Calu3 (cell line): ENCODE measurements at regions of chr1 and their contacts with region 1.

Region 1: GRCh38 chr1:36350659-36351226 is 27.3 kb upstream of the EVA1B start:
- DNase-seq: peak; percentile 76
- H3K4me3 Mint-ChIP-seq: peak overlapping the region; percentile 32
- H3K27ac Mint-ChIP-seq: peak overlapping the region; percentile 92
- H3K4me1 Mint-ChIP-seq: peaks cover 36% of the 10 kb centered on the region
- H3K27me3 Mint-ChIP-seq: no peaks in the 10 kb centered on the region
- CTCF ChIP-seq: no peak

Region 2: GRCh38 chr1:36300526-36300925 is 50.2 kb before region 1 on chr1:
- CTCF ChIA-PET with region 1: interaction called, 10 read pairs
- intact Hi-C with region 1: no loop called
- DNase-seq: no peak
- H3K4me3 Mint-ChIP-seq: peak overlapping the region; percentile 41
- H3K27ac Mint-ChIP-seq: peak overlapping the region; percentile 94
- H3K4me1 Mint-ChIP-seq: peaks cover 22% of the 10 kb centered on the region
- H3K27me3 Mint-ChIP-seq: no peaks in the 10 kb centered on the region
- CTCF ChIP-seq: no peak

Region 3: DNA sequence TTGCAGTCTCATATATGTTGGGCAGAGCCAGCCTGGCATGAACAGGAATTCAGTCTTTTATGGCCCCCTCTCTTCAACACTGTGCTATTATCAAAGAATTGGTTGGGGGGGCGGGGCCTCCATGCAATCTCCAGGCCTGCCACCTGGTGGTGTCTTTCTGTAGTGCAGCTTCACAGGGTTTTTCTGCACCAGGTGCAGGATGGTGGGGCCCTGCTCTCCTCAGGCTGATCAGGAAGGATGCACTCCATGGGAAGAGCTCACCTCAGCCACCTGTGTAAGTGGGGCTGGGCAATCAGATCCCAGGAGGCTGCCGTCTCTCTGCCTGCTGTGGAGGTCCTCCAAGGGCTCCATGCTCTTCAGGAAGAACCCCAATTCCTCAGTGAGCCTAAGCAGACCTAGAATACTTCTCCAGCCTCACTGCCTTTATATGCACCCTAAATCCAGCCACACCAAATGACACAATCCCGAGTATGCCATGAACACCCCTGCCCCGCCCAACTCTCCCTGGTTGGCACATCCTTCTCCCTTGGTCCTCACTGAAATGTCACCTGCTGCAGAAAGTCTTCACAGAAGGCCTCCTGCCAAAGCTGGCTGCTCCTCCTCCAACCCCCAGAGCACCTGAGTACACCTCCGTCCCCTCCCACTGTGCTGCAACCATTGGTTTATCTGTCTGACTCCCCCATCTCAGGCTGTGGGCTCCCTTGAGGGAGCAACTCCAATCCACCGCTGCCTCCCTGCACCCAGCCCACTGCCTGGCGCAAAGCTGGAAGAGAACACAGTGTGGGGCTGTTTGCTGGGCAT is 18.5 kb after region 1 on chr1:
- CTCF ChIA-PET with region 1: interaction called, 12 read pairs
- intact Hi-C with region 1: loop called (anchors 2 kb)
- DNase-seq: peak; percentile 87
- H3K4me3 Mint-ChIP-seq: no peak overlapping the region
- H3K27ac Mint-ChIP-seq: peak overlapping the region; percentile 50
- H3K4me1 Mint-ChIP-seq: peaks cover 28% of the 10 kb centered on the region
- H3K27me3 Mint-ChIP-seq: no peaks in the 10 kb centered on the region
- CTCF ChIP-seq: peak; percentile 87

Region 4: DNA sequence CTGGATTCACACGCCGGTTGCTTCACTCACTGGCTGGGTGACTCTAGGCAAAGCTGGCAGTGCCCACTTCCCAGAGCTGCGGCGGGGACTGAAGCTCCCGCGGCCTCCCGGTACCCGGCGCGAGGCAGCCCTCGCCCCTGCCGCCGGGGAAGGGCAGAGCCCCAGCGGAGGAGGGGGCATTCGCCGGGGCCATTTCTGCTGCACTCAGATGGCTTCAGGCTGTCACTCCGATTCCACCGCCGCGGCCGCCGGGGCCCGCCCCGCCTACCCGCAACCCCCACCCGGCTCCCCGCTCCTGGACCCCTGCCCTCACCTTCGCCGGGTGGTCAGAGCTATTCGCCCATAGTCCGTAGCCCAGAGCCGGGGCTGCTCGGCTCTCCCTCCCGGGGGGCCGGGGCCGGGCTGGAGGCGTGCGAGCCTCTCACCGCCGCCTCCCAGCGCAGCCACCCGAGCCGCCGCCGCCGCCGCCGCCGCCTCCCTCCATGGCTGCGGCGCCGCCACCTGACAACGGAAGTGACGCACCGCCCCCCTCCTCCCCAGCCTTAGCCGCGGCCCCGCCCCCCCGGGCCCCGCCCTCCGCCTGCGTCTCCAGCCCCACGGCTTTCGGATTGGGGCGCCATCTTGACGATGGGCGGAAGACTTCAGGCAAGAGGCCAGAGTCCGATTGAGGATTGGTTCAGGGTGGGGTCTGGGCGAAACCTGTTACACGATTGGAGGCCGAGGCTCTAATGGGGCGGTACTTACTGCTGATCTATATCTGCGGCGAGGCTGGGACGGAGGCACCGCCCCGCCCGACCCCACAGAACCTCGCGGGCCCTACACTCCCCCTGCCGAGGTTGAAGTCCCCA is 34.9 kb after region 1 on chr1 and contains the start of gene STK40:
- CTCF ChIA-PET with region 1: interaction called, 12 read pairs
- intact Hi-C with region 1: no loop called
- DNase-seq: peak; percentile 96
- H3K4me3 Mint-ChIP-seq: peak within 1 kb of the TSS; percentile 90
- H3K27ac Mint-ChIP-seq: peak within 1 kb of the TSS; percentile 100
- H3K4me1 Mint-ChIP-seq: peaks cover 59% of the 10 kb centered on the region
- H3K27me3 Mint-ChIP-seq: no peaks in the 10 kb centered on the region
- CTCF ChIP-seq: no peak
- total RNA-seq, gene STK40: 44.5 and 52.1 TPM in 2 replicates

Region 5: DNA sequence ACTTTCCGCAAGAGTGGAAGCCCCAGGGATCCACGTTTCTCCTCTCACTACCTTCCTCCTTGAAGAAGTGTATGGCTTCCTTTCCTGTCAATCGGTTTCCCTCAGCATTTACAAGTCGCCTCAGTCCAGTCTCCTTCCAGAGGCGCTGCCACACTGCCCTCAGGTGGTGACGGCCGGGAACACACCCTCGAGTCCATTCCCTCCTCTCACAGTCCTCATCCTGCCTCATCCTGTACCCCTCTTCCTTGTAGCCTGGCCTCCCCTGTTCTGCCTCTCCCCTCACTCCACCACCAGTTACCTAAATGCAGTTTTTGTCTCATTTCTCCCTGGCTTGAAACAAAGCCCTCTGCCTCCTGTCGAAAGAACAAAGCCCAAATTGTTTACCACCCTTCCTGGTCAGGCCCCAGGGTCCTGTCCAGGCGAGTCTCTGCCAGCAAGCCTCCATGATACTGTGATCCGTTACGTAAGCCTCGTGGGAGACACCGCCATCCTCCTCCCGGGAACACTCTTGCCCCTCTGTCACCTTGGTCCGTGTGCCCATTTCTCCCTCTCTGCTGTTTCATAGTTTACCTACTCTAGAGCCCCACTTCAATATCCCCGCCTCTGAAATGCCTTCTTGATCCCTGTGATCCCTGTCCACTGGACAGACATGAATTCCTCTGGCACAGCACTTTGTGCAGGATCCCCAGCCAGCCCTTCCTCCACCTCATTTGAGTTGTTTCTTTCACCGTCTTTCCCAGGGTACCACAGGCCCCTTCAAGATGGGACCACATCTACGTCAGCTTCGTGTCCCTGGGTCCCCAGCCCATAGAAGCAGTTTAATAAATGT is 70.3 kb after region 1 on chr1:
- CTCF ChIA-PET with region 1: no interaction called
- intact Hi-C with region 1: loop called (anchors 2 kb)
- DNase-seq: peak; percentile 94
- H3K4me3 Mint-ChIP-seq: no peak overlapping the region
- H3K27ac Mint-ChIP-seq: peak overlapping the region; percentile 37
- H3K4me1 Mint-ChIP-seq: peaks cover 19% of the 10 kb centered on the region
- H3K27me3 Mint-ChIP-seq: no peaks in the 10 kb centered on the region
- CTCF ChIP-seq: peak; percentile 95